Psoas muscle (tissue), 8 donors: ENCODE measurements at regions of chr17 and their contacts with region 1.

Region 1: GRCh38 chr17:64599187-64599676 is 62.9 kb downstream of the SMURF2 start:
- DNase-seq: no peak
- ATAC-seq: no peak
- H3K4me3 ChIP-seq: no peak overlapping the region
- H3K27ac ChIP-seq: no peak overlapping the region
- H3K4me1 ChIP-seq: no peaks in the 10 kb centered on the region
- H3K27me3 ChIP-seq: no peaks in the 10 kb centered on the region
- CTCF ChIP-seq: no peak

Region 2: GRCh38 chr17:64648234-64648633 is 49.0 kb after region 1 on chr17:
- intact Hi-C with region 1: loop called in 1 of 2 experiments (anchors 10 kb)
- DNase-seq: no peak
- ATAC-seq: no peak
- H3K4me3 ChIP-seq: no peak overlapping the region
- H3K27ac ChIP-seq: no peak overlapping the region
- H3K4me1 ChIP-seq: no peaks in the 10 kb centered on the region
- H3K27me3 ChIP-seq: no peaks in the 10 kb centered on the region
- CTCF ChIP-seq: no peak